MCF 10A (cell line): ENCODE measurements at regions of chr3 and their contacts with region 1.

Region 1: DNA sequence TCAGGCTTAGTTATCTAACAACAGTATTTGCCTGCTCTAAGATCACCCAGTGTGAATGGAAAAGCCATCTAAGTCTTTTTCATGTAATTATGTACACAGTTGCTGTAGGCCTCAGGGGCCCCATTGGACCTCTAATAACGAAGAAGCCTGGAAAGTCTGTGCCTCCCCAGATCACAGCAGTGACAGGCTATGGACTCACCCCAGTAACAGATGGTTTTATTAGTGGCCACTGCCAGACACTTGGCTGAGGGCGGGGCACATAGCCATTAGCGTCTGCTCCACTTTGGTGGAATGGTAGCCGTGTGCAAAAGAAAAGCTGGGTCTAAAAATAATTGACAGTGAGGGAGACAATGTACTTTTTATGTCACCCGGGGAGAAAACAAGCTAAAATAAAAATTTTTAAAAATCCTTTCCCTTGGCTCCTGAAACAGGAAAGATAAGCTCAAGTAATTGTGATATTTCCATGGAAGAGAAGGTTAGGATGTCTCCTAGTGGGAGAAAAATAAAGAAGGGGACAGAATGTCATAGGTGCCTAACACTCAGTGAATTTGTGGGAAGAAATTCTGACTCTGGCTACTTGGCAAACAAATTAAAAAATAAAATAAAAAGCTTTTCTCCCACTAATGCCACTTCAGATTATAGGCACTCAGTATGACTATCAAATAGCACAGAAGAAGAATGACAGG is 44.3 kb upstream of the ZNF385D start:
- DNase-seq: no peak
- H3K4me3 Mint-ChIP-seq: no peak overlapping the region
- H3K27ac Mint-ChIP-seq: no peak overlapping the region
- H3K4me1 Mint-ChIP-seq: no peaks in the 10 kb centered on the region
- H3K27me3 Mint-ChIP-seq: no peaks in the 10 kb centered on the region
- CTCF ChIP-seq: no peak

Region 2: GRCh38 chr3:21755896-21756295 is 39.4 kb before region 1 on chr3:
- CTCF ChIA-PET with region 1: no interaction called
- POLR2A ChIA-PET with region 1: no interaction called
- intact Hi-C with region 1: no loop called
- DNase-seq: no peak
- H3K4me3 Mint-ChIP-seq: no peak overlapping the region
- H3K27ac Mint-ChIP-seq: no peak overlapping the region
- H3K4me1 Mint-ChIP-seq: peaks cover 6% of the 10 kb centered on the region
- H3K27me3 Mint-ChIP-seq: no peaks in the 10 kb centered on the region
- CTCF ChIP-seq: no peak

Region 3: DNA sequence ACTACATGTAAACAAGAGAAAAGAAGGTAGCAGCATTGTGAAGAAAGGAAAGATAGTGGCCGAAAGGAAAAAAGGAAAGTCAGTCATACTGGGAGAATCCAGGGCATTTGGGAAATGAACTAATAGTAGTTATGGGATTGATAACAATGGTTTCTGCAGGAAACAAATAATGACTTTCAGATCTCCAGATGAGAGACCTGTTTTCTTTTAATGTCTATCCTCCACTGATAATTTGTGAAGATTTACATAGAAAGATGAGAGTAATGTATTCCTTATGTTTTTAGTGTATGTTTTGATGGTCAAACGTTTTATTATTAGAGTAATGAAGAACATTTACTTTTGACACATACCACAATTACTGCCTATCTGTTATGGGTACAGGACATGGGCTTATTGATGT is 29.3 kb before region 1 on chr3:
- CTCF ChIA-PET with region 1: no interaction called
- POLR2A ChIA-PET with region 1: no interaction called
- intact Hi-C with region 1: loop called (anchors 1 kb)
- DNase-seq: no peak
- H3K4me3 Mint-ChIP-seq: no peak overlapping the region
- H3K27ac Mint-ChIP-seq: no peak overlapping the region
- H3K4me1 Mint-ChIP-seq: no peaks in the 10 kb centered on the region
- H3K27me3 Mint-ChIP-seq: no peaks in the 10 kb centered on the region
- CTCF ChIP-seq: no peak